ENCODE measurements at regions of chr17 and their contacts with region 1.

Region 1: DNA sequence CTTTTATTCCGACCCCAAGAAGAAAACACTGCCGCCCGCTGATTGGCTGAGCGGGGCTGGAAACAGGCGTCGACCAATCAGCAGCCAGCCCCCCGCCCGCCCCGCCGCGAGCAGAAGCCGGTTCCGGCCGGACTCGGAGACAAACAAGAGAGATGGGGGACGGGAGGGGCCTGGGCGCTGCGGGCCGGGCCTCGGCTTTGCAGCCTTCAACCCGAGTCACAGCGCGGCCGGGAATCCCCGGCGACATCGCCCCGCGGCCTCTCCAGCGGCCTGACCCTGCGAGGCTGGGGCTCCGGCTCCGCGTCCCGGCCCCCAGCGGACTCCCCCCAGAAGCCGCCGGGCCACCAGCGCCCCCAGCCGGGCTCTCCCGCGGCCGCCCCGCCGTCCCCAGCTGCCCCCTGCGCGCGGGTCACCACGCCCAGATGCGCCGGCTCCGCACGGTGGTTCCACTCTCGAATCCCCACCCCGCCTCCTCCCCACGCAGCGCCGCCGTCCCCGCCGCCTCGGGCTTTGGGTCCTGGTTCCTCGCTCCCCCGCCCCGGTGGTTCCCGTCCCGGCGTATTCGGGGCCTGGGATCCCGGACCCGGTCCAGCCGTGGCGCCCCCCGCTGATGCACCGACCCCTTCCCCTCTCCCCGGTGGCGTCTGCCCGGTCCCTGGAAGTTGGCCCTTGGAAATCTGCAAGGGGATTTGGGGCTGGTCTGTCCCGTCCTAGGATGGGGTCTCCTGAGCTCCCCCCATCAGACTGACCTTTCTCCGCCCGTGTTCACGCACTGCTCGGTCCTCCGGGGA is 417 bp upstream of the SLC43A2 start:
- DNase-seq: peak; percentile 56
- H3K4me3 ChIP-seq: peak overlapping the region; percentile 74
- H3K27me3 ChIP-seq: no peaks in the 10 kb centered on the region; the same call in 1 of the 2 replicates
- CTCF ChIP-seq: no peak

Region 2: DNA sequence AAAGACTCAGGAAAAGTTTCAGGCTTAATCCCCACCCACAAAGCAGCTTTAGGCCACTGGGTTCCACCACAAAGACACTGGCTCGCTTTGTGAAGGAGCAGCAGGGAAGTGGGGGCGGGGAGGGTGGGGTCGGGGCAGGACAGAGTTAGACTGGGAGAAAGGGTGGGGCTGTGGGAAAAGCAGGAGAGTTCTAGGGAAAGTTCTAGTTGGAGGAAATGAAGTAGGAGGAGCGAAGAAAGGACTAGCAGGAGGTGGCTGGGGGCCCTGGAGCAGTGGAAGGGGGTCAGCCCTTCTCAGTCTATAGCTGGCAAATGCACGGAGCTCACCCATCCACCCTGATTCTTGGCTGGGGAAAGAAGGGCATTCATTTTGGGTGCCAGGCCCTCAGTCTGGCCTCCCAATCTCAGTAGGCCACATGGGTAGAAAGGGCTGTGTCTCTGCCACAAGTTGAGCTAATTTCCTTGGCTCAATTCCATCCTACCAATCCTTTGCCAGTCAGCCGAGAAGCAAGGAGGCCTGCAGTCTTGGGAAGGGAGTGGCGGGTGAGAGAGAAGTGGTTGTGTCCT is 117.2 kb before region 1 on chr17:
- CTCF ChIA-PET with region 1: no interaction called
- POLR2A ChIA-PET with region 1: no interaction called
- DNase-seq: no peak
- H3K4me3 ChIP-seq: no peak overlapping the region
- H3K27me3 ChIP-seq: no peaks in the 10 kb centered on the region
- CTCF ChIP-seq: no peak

Region 3: DNA sequence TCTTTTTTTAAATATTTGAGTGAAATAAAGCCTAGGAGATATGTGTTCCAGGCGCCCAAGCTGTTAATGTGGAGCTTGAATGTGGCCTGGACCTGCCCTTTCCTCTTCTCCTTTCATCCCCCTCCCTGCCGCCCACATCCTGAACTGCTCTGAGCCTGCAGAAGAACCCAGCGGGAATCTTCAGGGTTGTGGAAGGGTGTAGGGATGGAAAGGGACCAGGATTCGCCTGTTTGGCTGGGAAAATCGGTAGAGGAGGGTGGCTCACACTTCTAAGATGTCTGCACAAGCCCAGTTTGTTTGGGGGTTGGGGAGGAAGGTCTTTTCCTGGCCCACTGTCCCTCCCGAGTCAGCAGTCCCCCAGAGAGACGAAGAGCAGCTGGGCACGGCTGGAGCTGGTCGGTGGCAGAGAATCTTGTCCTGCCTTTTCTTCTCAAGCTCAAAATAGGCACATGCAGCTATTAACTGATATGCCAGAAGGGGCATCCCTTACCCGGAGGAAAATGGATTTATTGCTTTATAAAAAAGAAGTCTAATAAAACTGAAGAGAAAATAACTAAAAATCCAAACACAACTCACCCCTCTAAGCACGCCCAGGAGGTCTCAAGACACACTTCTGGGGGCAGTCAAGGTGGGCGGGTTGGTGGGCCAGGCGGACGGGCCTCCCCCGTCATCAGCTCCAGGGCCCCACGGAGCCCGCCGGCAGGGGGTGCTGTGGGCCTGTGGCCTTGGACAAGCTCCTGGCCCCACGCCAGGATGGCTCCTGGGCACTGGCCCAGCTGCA is 54.9 kb before region 1 on chr17:
- CTCF ChIA-PET with region 1: interaction called, 64 read pairs
- POLR2A ChIA-PET with region 1: no interaction called
- DNase-seq: no peak
- H3K4me3 ChIP-seq: no peak overlapping the region
- H3K27me3 ChIP-seq: no peaks in the 10 kb centered on the region; the same call in 1 of the 2 replicates
- CTCF ChIP-seq: peak; percentile 97

Region 4: DNA sequence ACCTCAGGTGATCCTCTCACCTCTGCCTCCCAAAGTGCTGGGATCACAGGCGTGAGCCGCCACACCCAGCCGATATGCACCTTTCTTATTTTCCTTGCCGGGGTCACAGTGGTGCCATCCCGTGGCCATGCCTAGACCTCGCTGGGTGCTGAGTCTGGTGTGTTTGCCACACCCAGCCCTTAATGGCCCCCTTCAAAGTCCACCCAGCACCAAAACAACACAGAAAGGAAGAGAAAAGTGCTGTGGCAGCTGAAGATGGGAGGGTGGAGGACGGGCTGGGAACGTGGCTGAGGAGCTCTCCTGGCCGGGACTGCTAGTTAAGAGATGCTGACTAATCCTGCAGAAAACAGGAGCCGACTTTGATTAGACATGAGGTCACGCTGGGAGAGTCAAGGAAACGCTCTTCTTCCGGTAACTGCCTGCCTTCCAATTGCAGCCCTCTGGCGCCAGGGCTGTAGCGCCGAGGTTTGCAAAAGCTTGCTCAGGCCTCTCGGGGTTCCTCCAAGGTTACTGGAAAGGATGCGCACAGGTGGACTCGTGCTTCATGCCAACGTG is 11.4 kb before region 1 on chr17:
- CTCF ChIA-PET with region 1: interaction called, 10 read pairs
- POLR2A ChIA-PET with region 1: no interaction called
- DNase-seq: no peak
- H3K4me3 ChIP-seq: no peak overlapping the region
- H3K27me3 ChIP-seq: no peaks in the 10 kb centered on the region
- CTCF ChIP-seq: no peak

Region 5: GRCh38 chr17:1643293-1643998 is 14.4 kb after region 1 on chr17:
- CTCF ChIA-PET with region 1: interaction called, 18 read pairs
- POLR2A ChIA-PET with region 1: interaction called, 4 read pairs
- DNase-seq: no peak
- H3K4me3 ChIP-seq: peak overlapping the region; percentile 33
- H3K27me3 ChIP-seq: no peaks in the 10 kb centered on the region
- CTCF ChIP-seq: no peak

Region 6: DNA sequence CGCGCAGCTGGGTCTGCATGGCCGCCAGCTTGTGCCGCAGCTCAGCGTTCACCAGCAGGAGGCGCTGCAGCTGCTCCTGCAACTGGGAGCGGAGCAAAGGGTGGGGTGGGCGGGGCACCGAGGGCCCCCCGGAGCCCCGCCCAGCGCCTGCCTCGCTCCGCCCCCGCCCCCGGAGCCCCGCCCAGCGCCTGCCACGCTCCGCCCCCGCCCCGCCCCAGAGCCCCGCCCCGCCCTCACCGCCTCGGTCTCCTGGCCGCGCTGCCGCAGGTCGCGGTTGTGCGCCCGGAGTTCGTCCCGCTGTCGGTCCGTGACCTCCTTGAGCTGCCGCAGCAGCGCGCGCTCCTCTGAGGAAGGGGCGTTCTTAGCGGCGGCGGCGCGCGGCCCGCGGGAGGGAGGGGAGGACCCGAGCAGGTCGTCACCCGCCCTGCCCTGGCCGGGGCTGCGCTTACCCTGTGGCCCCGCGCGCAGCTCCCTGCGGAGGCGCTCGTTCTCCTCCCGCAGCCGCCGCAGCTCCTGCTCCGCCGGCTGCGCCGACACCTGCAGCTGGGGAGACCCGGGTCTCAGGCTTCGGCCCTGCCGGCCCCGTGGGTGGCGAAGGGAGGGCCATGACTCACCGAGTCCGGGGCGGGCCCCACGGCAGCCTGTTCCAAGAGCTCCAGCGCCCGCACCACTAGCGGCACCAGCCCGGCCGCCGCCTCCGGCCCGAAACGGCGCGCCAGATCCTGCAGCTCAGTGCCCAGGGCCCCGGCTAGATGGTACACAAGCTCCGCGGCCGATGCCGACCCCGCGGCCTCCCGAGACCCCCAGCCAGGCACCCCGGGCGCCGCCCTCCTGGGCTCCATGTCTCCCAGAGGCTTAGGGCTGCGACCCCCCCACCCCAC is 20.2 kb after region 1 on chr17:
- CTCF ChIA-PET with region 1: interaction called, 18 read pairs
- POLR2A ChIA-PET with region 1: no interaction called
- DNase-seq: peak; percentile 67
- H3K4me3 ChIP-seq: peak overlapping the region; percentile 63
- H3K27me3 ChIP-seq: no peaks in the 10 kb centered on the region
- CTCF ChIP-seq: peak; percentile 84

Region 7: DNA sequence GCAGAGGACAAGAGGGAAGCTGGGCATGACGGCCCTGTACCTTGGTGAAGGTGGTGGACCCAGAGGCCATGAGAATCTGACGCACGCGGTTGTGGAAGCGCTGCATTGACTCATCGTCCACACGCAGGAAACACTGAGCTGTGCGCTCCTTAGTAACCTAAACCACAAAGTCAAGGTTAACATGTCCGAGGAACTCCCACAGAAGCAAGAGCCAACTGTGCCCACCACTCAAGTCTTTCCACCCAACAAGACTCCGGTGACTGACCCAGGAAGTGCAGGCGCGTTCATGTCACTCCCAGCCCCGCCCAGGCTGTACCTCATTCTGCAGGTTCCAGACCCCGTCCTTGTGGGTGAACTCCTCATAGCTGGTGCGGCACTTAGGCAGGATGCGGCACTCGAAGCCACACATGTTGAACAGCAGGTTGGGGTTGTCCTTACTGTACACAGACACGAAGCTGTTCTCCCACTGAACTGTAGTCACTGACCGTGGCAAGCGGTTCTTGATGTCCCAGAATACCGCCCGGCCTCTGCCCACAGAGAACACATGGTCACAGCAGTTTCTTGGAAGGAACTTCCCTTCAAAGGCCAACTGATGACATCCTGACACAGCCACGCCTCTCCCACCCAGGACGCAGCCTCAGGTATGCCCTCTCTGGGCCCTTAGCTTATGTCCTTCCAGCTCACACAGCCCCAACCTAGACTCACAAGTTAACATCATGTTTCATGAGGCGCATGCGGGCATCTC is 44.2 kb after region 1 on chr17:
- CTCF ChIA-PET with region 1: no interaction called
- POLR2A ChIA-PET with region 1: no interaction called
- DNase-seq: no peak
- H3K4me3 ChIP-seq: no peak overlapping the region
- H3K27me3 ChIP-seq: no peaks in the 10 kb centered on the region
- CTCF ChIP-seq: no peak

Measured in BJ (cell line).